Activated CD4-positive, alpha-beta memory T cell treated with anti-CD3 and anti-CD28 coated beads for 36 hours (primary cell): ENCODE measurements at regions of chr2 and their contacts with region 1.

Region 1: DNA sequence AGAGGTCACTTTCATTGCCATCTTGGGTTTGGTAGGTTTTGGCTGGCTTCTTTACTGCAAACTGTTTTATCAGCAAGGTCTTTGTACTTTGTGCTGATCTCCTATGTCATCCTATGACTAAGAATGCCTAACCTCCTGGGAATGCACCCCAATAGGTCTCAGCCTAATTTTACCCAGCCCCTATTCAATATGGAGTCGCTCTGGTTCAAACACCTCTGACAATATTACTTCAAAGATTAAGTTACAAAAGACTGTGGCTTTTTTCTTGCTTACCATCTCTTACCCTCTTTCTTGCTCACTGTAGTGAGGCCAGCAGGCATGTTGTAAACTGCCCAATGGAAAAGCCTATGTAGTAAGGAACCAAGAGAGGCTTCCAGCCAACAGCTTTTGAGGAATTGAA is 17.9 kb upstream of the RGPD8 start:
- DNase-seq: no peak
- H3K4me3 Mint-ChIP-seq: no peak overlapping the region
- H3K27ac Mint-ChIP-seq: no peak overlapping the region
- H3K4me1 Mint-ChIP-seq: no peaks in the 10 kb centered on the region
- H3K27me3 Mint-ChIP-seq: no peaks in the 10 kb centered on the region

Region 2: GRCh38 chr2:112463256-112463655 is 11.9 kb after region 1 on chr2:
- CTCF ChIA-PET with region 1: no interaction called
- POLR2A ChIA-PET with region 1: no interaction called
- intact Hi-C with region 1: loop called (anchors 1 kb)
- DNase-seq: no peak
- H3K4me3 Mint-ChIP-seq: no peak overlapping the region
- H3K27ac Mint-ChIP-seq: no peak overlapping the region
- H3K4me1 Mint-ChIP-seq: no peaks in the 10 kb centered on the region
- H3K27me3 Mint-ChIP-seq: peaks cover 8% of the 10 kb centered on the region

Region 3: DNA sequence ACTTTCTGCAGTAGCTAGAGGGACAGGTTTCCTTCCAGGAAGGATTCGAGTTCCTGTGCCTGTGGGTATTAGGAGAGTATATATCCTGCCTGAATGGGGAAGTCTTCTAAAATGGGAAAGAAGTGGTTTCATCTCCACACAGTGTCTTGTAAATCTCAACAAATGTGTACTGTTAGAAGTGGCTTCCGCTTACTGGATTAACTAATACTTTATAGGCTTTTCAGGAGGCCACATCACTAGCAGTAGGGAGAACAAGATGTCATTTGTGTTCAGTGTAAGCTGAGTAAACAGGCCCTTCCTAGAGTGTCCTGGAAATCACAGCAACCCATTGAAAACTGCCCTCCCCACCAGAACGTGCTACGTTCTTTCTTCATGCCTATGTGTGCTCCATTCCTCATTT is 78.4 kb after region 1 on chr2:
- CTCF ChIA-PET with region 1: no interaction called
- POLR2A ChIA-PET with region 1: no interaction called
- intact Hi-C with region 1: no loop called
- DNase-seq: no peak
- H3K4me3 Mint-ChIP-seq: no peak overlapping the region
- H3K27ac Mint-ChIP-seq: no peak overlapping the region
- H3K4me1 Mint-ChIP-seq: no peaks in the 10 kb centered on the region
- H3K27me3 Mint-ChIP-seq: no peaks in the 10 kb centered on the region

Region 4: DNA sequence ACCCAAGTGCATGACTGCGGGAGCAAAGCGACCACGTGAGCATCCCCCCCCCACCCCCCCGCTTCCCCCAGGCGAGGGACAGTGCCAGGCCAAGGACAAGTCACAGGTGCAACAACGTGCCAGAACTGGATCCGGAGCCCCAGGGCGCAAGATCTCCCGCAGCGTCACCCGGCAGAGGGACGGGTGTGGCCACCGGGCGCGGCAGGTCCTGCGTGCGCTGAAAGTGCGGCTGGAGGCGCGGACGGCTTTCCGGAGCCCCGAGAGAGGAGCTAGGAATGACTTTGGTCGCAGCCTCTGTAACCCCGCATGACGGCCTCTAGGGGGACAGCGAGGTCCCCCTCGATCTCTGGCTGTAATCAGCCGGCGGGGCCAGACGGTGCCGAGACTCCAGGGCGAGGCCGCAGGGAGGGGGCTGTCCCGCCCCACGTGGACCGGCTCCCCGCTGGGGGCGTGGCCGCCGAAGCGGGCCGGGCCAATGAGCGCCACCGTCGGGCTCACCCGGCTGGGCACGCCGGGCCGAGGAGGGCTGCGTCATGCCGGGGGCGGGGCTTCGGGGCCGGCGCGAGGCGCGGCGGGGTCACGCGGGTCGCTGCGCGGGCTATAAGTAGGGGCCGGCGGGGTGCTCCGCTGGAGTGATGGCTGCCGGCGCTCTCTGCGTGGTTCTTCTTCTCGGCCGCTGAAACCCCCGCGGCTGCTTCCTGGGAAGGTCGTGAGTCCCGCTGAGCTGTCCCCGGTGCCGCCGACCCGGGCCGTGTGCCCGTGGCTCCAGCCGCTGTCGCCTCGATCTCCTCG is 194.2 kb after region 1 on chr2 and contains the start of gene SLC20A1:
- CTCF ChIA-PET with region 1: no interaction called
- POLR2A ChIA-PET with region 1: no interaction called
- intact Hi-C with region 1: no loop called
- DNase-seq: peak; percentile 98
- H3K4me3 Mint-ChIP-seq: peak within 1 kb of the TSS; percentile 97
- H3K27ac Mint-ChIP-seq: peak within 1 kb of the TSS; percentile 87
- H3K4me1 Mint-ChIP-seq: peaks cover 52% of the 10 kb centered on the region
- H3K27me3 Mint-ChIP-seq: no peaks in the 10 kb centered on the region
- total RNA-seq, gene SLC20A1: 88.8 to 91.3 TPM